B cell (primary cell): ENCODE measurements at regions of chr3 and their contacts with region 1.

Region 1: GRCh38 chr3:102536456-102536855 is 101.6 kb downstream of the ZPLD1 start:
- DNase-seq: peak; percentile 50
- ATAC-seq: no peak
- H3K4me3 ChIP-seq: no peak overlapping the region
- H3K4me3 Mint-ChIP-seq: no peak overlapping the region
- H3K27ac ChIP-seq: no peak overlapping the region
- H3K27ac Mint-ChIP-seq: no peak overlapping the region
- H3K4me1 ChIP-seq: peaks cover 0 to 5% of the 10 kb centered on the region in 2 donors
- H3K4me1 Mint-ChIP-seq: peaks cover 5% of the 10 kb centered on the region
- H3K27me3 ChIP-seq: peaks cover 0 to 10% (median 5%) of the 10 kb centered on the region in 4 experiments
- H3K27me3 Mint-ChIP-seq: peaks cover 28% of the 10 kb centered on the region
- CTCF ChIP-seq: peak; percentile 54

Region 2: DNA sequence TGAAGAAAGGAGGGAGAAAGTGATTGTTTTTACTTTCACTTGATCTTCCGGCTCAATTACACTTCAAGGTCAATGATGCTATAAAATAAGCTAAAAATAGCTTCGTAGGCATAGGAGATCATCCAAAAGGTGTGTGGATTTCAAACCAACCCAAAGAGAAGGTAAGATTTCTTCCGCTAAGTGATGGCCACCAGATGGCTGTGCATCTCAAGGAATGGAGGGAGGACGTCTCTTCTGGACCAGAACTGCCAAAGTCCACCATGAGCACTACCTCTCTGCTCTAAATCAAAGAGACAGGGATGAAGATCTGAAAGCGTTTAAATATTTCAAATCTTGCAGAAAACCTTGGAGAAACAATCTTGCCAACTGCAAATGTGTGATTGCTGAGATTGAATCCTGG is 300.8 kb before region 1 on chr3:
- CTCF ChIA-PET with region 1: interaction called, 253 read pairs
- POLR2A ChIA-PET with region 1: no interaction called
- intact Hi-C with region 1: no loop called
- DNase-seq: no peak
- ATAC-seq: no peak
- H3K4me3 ChIP-seq: no peak overlapping the region
- H3K4me3 Mint-ChIP-seq: no peak overlapping the region
- H3K27ac ChIP-seq: no peak overlapping the region
- H3K27ac Mint-ChIP-seq: no peak overlapping the region
- H3K4me1 ChIP-seq: peaks cover 37 to 42% of the 10 kb centered on the region in 2 donors
- H3K4me1 Mint-ChIP-seq: peaks cover 39% of the 10 kb centered on the region
- H3K27me3 ChIP-seq: peaks cover 0 to 3% (median 2%) of the 10 kb centered on the region in 4 experiments
- H3K27me3 Mint-ChIP-seq: peaks cover 9% of the 10 kb centered on the region
- CTCF ChIP-seq: peak; percentile 72